ENCODE measurements at regions of chr2 and their contacts with region 1.

Region 1: DNA sequence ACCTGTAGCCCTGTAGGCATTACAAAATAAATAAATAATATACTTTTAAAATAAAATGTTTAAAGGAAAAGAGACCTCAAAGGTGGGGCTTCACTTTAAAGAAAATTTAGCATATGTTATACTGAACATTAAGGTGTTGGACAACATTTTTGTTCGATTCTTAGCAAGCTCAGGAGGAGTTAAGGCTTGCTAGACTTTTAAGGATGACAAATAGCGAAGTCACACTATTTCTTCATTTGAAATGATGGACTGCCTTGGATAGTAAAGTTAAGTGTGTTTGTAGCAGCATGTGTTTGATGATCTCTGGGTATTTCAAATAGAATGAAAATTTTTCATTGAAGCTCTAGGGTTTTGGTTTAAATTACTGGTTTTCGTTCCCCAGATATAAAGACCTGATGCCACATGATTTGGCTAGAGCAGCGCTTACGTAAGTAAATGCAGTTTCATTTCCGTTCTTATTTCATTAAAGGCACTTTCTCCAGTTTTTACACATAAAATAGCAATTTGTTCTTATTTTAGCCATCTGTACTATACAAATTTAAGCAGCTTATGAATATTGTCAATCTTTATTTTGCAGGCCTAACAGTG is 24.9 kb downstream of the HADHB start:
- DNase-seq: no peak
- H3K4me3 ChIP-seq: no peak overlapping the region
- H3K27ac ChIP-seq: no peak overlapping the region
- H3K4me1 ChIP-seq: peaks cover 20% of the 10 kb centered on the region
- H3K27me3 ChIP-seq: no peaks in the 10 kb centered on the region
- CTCF ChIP-seq: no peak

Region 2: DNA sequence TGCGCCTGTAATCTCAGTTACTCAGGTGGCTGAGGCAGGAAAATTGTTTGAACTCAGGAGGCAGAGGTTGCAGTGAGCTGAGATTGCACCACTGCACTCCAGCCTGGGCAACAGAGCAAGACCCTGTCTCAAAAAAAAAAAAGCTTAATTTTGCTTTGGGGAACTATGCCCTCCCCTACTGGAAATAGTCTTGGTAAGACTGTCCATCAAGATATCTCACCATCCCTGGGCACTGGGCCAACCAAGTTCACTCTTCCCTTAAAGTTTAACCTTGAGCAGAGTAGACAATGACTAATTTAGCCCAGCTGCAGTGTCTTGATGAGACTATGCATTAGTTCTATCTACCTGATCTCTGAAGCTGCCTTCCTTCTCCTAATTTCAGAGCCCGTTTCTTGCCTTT is 436.1 kb before region 1 on chr2:
- CTCF ChIA-PET with region 1: interaction called, 11 read pairs
- POLR2A ChIA-PET with region 1: no interaction called
- intact Hi-C with region 1: no loop called
- DNase-seq: no peak
- H3K4me3 ChIP-seq: no peak overlapping the region
- H3K27ac ChIP-seq: no peak overlapping the region
- H3K4me1 ChIP-seq: peaks cover 16% of the 10 kb centered on the region
- H3K27me3 ChIP-seq: no peaks in the 10 kb centered on the region
- CTCF ChIP-seq: no peak

Region 3: GRCh38 chr2:25878361-25879132 is 391.1 kb before region 1 on chr2 and contains the start of gene ASXL2:
- CTCF ChIA-PET with region 1: no interaction called
- POLR2A ChIA-PET with region 1: no interaction called
- intact Hi-C with region 1: no loop called
- DNase-seq: peak; percentile 95 to 97
- H3K4me3 ChIP-seq: peak within 1 kb of the TSS; percentile 75
- H3K27ac ChIP-seq: peak within 1 kb of the TSS; percentile 88
- H3K4me1 ChIP-seq: peaks cover 29% of the 10 kb centered on the region
- H3K27me3 ChIP-seq: no peaks in the 10 kb centered on the region
- CTCF ChIP-seq: no peak
- total RNA-seq, gene ASXL2: 19.2 and 34.5 TPM in 2 replicates

Measured in PC-9 (cell line).